Tibial artery (tissue), 4 donors: ENCODE measurements at regions of chr19 and their contacts with region 1.

Region 1: DNA sequence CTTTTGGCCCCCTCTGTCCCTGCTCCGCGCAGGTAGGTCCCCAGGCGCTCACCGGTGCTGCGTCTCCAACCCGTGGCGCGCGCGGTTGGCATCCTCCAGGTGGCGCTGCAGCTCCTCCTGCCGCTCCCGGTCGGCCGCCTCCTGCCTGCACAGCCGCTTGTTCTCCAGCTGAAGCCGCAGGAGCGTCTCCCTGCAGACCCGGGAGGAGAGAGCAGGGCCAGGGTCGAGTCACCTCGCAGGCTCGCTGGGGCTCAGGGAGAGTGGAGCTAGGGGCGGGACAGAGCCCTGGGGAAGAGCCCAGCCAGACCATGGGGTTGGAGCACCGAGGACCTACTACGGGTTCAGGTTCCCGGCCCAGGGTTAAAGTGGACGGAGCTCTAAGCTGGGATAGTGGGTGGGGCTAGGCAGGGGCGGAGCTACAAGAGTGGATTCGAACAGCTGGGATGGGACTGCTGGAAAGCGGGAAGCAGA is 9.3 kb downstream of the HOOK2 start:
- DNase-seq: peak; percentile 72 to 86
- H3K4me3 ChIP-seq: peak overlapping the region; percentile 39 to 40
- H3K27ac ChIP-seq: peak overlapping the region in 1 of 2 donors; percentile 27
- H3K4me1 ChIP-seq: peaks cover 0 to 8% (median 2%) of the 10 kb centered on the region in 4 donors
- H3K27me3 ChIP-seq: no peaks in the 10 kb centered on the region
- CTCF ChIP-seq: peak; percentile 67 to 77

Region 2: GRCh38 chr19:12796146-12797071 is 30.3 kb after region 1 on chr19:
- intact Hi-C with region 1: loop called (anchors 2 kb)
- DNase-seq: peak in 1 of 2 donors; percentile 86
- H3K4me3 ChIP-seq: no peak overlapping the region
- H3K27ac ChIP-seq: peak overlapping the region; percentile 60 to 98
- H3K4me1 ChIP-seq: peaks cover 0 to 32% (median 24%) of the 10 kb centered on the region in 4 donors
- H3K27me3 ChIP-seq: no peaks in the 10 kb centered on the region
- CTCF ChIP-seq: peak; percentile 95 to 97

Region 3: GRCh38 chr19:12847159-12848139 is 81.4 kb after region 1 on chr19:
- intact Hi-C with region 1: loop called (anchors 5 kb)
- DNase-seq: peak; percentile 73 to 84
- H3K4me3 ChIP-seq: peak overlapping the region in 1 of 2 donors; percentile 16
- H3K27ac ChIP-seq: no peak overlapping the region
- H3K4me1 ChIP-seq: peaks cover 0 to 11% (median 6%) of the 10 kb centered on the region in 4 donors
- H3K27me3 ChIP-seq: peaks cover 0 to 56% of the 10 kb centered on the region in 2 donors
- CTCF ChIP-seq: peak; percentile 98 to 99